ENCODE measurements at regions of chr12 and their contacts with region 1.

Region 1: DNA sequence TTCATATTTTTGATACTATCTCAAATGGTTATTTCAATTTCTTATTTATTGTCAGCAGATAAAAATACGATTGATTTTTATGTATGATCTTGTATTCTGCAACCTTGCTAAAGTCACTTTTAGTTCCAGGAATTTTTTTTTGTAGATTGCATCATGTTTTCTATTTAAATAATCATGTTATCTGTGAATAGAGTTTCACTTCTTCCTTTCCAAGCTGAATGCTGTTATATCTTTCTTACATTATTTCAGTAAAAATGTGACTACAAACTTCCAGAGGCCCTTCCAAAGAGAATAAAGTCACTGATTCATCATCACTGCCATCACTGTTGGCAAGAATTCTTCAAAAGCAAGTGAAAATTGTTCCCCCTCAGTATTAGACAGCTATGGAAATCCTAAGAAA is 104.7 kb upstream of the RAP1B start:
- DNase-seq: no peak
- H3K4me3 ChIP-seq: no peak overlapping the region
- H3K27ac ChIP-seq: no peak overlapping the region
- H3K4me1 ChIP-seq: no peaks in the 10 kb centered on the region
- H3K27me3 ChIP-seq: no peaks in the 10 kb centered on the region
- CTCF ChIP-seq: no peak

Region 2: DNA sequence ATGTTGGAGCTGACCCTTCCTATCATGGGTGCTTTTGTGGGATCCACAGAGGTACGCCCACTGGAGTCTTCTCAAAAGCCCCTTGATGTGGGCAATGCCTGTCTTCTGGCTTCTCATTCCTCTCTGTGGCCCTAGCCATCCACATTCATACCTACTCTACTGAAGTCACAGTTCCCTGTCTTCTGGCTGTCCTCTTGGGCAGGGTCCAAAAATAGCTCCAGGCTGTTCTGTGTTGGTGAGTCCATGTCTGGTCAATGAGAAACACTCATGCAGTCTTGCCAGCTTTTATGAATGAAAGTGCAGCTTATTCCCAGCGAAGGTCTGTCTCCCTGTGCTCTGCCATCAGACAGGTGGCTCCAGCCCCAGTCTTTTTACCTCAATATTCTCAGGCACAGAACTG is 37.9 kb before region 1 on chr12:
- intact Hi-C with region 1: loop called (anchors 2 kb)
- DNase-seq: no peak
- H3K4me3 ChIP-seq: no peak overlapping the region
- H3K27ac ChIP-seq: no peak overlapping the region
- H3K4me1 ChIP-seq: peaks cover 0 to 15% (median 6%) of the 10 kb centered on the region in 4 donors
- H3K27me3 ChIP-seq: no peaks in the 10 kb centered on the region
- CTCF ChIP-seq: no peak